Endothelial cell of umbilical vein (primary cell): ENCODE measurements at regions of chr9 and their contacts with region 1.

Region 1: DNA sequence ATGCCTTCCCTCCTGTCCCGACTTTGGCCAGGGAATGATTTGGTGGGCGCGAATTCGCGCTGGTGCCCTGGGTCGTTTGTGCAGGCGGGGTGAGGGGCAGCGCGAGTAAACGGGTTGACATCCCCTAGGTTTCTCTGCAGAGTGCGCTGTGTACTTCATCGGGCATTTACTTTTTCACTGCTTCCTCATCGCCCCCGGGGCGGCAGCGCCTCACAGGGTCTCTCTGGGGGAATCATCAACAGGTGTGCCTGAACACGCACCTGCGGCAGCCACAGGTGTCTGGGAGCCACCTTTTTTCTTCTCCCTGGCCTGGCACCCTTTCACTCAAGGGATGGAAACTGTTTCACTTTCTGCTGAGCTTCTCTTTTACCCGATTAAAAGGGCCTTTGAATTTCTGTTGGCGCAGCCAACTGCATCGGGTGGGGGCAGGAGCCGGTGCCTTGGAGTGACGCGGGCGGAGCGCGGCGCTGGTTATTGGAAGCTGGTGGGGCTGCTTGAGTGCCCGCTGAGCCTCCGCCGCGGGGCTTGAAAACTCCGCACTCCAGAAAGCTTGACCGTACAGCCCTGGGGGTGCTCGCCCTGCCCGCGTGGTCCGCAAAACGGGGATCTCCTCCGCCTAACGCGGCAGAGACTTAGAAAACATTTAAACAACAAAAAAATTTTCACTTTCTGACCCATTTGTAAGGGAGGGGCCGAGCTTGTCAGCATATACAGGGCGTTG is 52.1 kb upstream of the TJP2 start:
- DNase-seq: peak; percentile 81
- H3K4me3 ChIP-seq: peak overlapping the region; percentile 69 to 83 (median 75)
- H3K27ac ChIP-seq: peak overlapping the region; percentile 69
- H3K4me1 ChIP-seq: peaks cover 21% of the 10 kb centered on the region
- H3K27me3 ChIP-seq: no peaks in the 10 kb centered on the region
- CTCF ChIP-seq: no peak
- POLR2A ChIP-seq: no peak

Region 2: DNA sequence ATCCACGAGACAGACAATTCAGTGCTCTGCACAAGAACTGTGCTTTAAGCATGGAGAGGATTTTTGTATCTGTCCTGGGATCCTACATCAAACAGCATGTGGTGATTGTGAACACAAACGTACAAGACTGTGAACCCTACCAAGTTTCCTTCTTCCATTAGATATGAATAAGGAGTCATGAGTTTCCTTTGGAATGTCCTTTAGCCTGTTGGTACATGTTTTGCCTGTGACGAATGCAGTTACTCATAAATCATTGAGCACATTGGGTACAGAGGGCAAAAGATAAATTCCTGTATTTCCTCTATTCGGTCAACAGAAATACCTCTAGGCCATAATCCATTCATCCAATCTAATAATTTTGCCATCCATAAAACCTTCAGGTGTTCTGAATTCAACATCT is 24.9 kb before region 1 on chr9:
- CTCF ChIA-PET with region 1: interaction called, 8 read pairs
- POLR2A ChIA-PET with region 1: interaction called, 4 read pairs
- dilution Hi-C with region 1: no loop called
- intact Hi-C with region 1: loop called (anchors 1 kb)
- DNase-seq: peak; percentile 93
- H3K4me3 ChIP-seq: no peak overlapping the region
- H3K27ac ChIP-seq: peak overlapping the region; percentile 89
- H3K4me1 ChIP-seq: peaks cover 41% of the 10 kb centered on the region
- H3K27me3 ChIP-seq: no peaks in the 10 kb centered on the region
- CTCF ChIP-seq: no peak
- POLR2A ChIP-seq: peak; percentile 82

Region 3: DNA sequence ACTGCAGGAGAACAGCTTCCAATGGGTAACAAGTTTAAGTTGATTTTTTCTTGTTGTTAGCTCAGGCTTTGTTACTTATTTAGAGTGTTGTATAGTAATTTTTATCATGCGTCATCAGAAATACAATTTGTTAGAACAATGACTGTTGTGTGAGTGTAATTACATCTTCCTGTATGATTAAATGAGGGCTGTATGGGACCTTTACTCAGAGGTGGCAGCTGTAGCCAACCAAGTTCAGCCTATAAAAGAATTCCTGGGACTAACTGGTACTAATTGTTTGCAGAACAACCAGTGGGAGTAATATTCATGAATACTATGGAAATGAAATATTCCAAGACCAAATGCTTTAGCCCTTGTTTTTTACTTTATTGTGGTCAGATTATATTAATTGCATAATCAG is 21.3 kb after region 1 on chr9:
- CTCF ChIA-PET with region 1: interaction called, 7 read pairs
- POLR2A ChIA-PET with region 1: no interaction called
- dilution Hi-C with region 1: no loop called
- intact Hi-C with region 1: loop called (anchors 2 kb)
- DNase-seq: peak; percentile 88
- H3K4me3 ChIP-seq: peak overlapping the region in 1 of 3 experiments; percentile 41
- H3K27ac ChIP-seq: peak overlapping the region; percentile 74
- H3K4me1 ChIP-seq: peaks cover 24% of the 10 kb centered on the region
- H3K27me3 ChIP-seq: no peaks in the 10 kb centered on the region
- CTCF ChIP-seq: no peak
- POLR2A ChIP-seq: no peak

Region 4: DNA sequence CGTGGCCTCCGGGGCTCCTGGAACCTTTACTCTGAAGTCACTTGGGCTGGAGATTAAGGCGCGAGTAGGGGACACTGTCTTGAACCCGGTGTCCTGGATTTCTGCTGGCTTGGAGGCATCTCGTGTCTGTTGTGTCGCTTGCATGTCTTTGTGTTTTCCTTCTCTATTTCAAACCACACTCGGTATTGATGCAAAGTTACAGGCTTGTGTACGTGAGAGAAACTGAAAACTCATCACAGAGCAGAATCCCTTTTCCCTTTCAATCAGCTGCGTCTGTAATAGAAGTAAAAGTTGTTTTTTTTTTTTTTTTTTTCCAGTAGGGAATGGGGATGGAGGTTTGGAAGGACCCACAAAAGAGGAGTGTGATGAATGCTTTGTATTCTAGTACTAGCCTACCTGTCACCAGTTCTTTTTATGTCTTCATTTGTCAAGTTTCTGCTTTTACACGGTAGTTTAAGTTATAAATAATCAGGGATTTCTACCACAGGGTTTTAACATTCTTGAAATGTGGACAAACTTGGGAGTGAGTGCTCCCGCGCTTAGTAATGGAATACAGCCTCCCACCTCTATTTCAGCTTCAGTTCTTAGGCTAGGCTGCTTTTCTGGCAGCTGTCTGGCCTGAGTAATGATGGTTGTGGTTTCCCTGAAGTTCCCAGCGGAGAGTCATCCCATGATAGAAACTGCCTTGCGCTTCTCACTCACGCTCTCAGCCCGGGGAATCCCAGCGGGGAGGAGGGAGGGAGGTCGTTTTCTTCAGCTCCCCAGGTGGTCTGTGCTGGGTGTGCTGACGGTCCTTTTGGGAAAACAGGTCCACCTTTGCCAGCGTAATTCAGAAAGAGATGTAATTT is 52.9 kb after region 1 on chr9:
- CTCF ChIA-PET with region 1: interaction called, 15 read pairs
- POLR2A ChIA-PET with region 1: interaction called, 4 read pairs
- dilution Hi-C with region 1: no loop called
- intact Hi-C with region 1: loop called (anchors 1 kb)
- DNase-seq: peak; percentile 57
- H3K4me3 ChIP-seq: peak overlapping the region; percentile 60 to 73 (median 64)
- H3K27ac ChIP-seq: peak overlapping the region; percentile 81
- H3K4me1 ChIP-seq: peaks cover 70% of the 10 kb centered on the region
- H3K27me3 ChIP-seq: no peaks in the 10 kb centered on the region
- CTCF ChIP-seq: no peak
- POLR2A ChIP-seq: no peak

Region 5: GRCh38 chr9:69229367-69229766 is 107.4 kb after region 1 on chr9:
- CTCF ChIA-PET with region 1: no interaction called
- POLR2A ChIA-PET with region 1: no interaction called
- dilution Hi-C with region 1: no loop called
- intact Hi-C with region 1: no loop called
- DNase-seq: no peak
- H3K4me3 ChIP-seq: no peak overlapping the region
- H3K27ac ChIP-seq: no peak overlapping the region
- H3K4me1 ChIP-seq: no peaks in the 10 kb centered on the region
- H3K27me3 ChIP-seq: no peaks in the 10 kb centered on the region
- CTCF ChIP-seq: no peak
- POLR2A ChIP-seq: no peak

Region 6: DNA sequence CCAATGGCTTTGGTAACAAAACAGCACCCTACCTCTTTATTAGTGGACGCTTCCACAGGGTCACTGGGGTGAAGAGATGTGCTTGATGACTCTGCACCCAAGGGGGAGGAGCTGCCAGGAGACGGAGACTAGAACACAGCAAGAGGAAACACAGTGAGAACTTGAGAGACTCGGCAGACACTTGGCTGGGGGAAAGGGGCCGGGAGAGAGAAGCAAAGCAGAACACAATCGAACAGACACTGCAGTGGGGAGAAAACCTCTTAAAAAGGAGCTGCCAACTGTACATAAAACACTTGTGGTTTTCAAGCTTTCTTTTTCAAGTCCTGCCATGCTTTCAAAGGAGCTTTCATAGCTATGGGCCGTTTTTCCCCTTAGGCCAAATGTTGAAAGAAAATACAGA is 354.0 kb after region 1 on chr9:
- CTCF ChIA-PET with region 1: no interaction called
- POLR2A ChIA-PET with region 1: no interaction called
- dilution Hi-C with region 1: no loop called
- intact Hi-C with region 1: no loop called
- DNase-seq: no peak
- H3K4me3 ChIP-seq: no peak overlapping the region
- H3K27ac ChIP-seq: no peak overlapping the region
- H3K4me1 ChIP-seq: peaks cover 11% of the 10 kb centered on the region
- H3K27me3 ChIP-seq: no peaks in the 10 kb centered on the region
- CTCF ChIP-seq: no peak
- POLR2A ChIP-seq: no peak